Activated CD8-positive, alpha-beta T cell treated with anti-CD3 and anti-CD28 coated beads, Interleukin-2, amount 10 ng/mL, durations not matched to agents 7 days and 5 days (primary cell): ENCODE measurements at regions of chr17 and their contacts with region 1.

Region 1: GRCh38 chr17:7989781-7990655 is 12.4 kb upstream of the GUCY2D start:
- DNase-seq: peak; percentile 93
- ATAC-seq: peak; percentile 91
- H3K4me3 Mint-ChIP-seq: peak overlapping the region; percentile 77
- H3K27ac Mint-ChIP-seq: peak overlapping the region; percentile 88
- H3K4me1 Mint-ChIP-seq: peaks cover 35% of the 10 kb centered on the region
- H3K27me3 Mint-ChIP-seq: peaks cover 16% of the 10 kb centered on the region

Region 2: GRCh38 chr17:7825206-7825990 is 164.6 kb before region 1 on chr17:
- CTCF ChIA-PET with region 1: interaction called, 21 read pairs
- POLR2A ChIA-PET with region 1: no interaction called
- DNase-seq: no peak
- ATAC-seq: no peak
- H3K4me3 Mint-ChIP-seq: no peak overlapping the region
- H3K27ac Mint-ChIP-seq: no peak overlapping the region
- H3K4me1 Mint-ChIP-seq: no peaks in the 10 kb centered on the region
- H3K27me3 Mint-ChIP-seq: peaks cover 18% of the 10 kb centered on the region

Region 3: DNA sequence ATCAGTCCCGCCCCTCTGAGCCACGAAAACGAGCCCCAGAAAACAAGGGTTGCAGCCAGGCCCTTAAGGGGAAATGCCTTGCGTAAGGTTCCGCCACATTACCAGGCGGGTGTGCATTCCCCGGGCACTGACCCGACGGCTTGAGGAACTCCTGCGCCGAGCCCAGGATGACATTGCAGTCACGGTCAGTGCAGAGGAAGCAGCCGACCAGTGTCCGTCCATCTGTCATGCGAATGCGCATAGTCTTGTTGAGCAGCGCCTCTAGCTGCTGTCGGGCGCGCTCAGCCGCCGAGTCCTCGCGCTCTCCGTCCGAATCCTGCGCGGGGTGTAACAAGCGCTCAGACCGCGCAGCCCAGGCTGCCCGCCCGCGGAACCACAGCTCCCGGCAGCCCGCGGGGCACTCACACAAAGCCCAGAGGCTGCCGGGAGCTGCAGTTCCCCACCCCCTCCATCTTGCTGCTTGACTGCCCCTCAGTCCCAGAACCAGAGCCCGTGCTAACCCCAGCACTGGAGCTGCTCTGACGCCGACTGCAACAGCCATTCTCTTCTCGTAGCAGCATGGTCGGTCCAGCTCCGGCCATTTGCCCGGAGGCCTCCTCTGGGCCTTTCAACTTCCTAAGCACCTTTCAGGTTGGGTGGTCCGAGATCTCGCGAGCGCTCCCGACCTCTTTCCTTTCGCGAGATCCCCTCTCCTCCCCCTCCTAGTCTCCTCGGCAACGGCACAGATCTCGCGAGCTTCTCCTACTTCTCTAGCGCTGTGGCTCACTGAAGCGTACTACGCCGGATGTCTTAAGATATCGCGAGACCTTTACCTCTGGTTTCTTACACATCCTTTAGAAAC is 132.9 kb before region 1 on chr17 and contains the start of gene NAA38:
- CTCF ChIA-PET with region 1: interaction called, 201 read pairs
- POLR2A ChIA-PET with region 1: interaction called, 5 read pairs
- DNase-seq: peak; percentile 98
- ATAC-seq: peak; percentile 89
- H3K4me3 Mint-ChIP-seq: no peak within 1 kb of the TSS
- H3K27ac Mint-ChIP-seq: no peak within 1 kb of the TSS
- H3K4me1 Mint-ChIP-seq: peaks cover 3% of the 10 kb centered on the region
- H3K27me3 Mint-ChIP-seq: no peaks in the 10 kb centered on the region
- total RNA-seq, gene NAA38: 92.7 to 93.1 TPM

Region 4: DNA sequence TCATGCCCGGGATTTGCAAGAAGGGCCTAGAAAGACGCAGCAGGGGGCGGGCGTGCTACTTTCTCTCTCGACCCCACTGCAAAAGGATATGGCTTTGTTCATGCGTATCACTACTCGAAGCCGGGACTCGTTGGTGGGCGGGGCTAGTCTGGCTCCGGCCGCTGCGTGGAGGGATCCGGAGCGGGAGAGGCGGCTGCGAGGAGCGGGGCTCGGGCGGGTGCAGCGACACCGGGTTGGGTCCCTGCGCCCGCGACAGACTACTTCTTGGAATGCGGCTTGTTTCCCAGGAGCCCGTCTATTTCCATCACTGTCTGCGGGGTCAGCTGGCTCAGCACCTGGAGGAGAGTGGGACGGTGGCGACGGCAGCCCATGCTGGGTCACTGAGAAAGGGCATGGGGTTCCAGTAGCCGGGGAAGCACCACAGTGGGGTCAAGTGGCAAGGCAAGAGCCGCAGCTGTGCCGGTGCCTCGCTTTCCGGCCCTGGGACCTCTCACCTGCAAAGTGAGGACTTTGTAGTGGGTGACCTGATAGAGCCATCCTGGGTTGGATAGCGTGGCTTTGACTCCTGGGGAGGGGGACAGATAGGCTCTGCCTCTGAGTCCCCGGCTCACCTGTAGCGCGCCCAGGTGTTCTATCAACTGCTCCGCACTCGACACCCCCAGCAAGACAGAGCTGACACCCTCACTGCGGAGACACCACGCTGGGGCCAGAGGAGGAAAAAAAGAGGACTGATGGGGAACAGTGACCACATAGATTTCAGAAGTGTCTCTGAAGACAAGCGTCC is 67.0 kb before region 1 on chr17:
- CTCF ChIA-PET with region 1: interaction called, 237 read pairs
- POLR2A ChIA-PET with region 1: no interaction called
- DNase-seq: peak; percentile 88
- ATAC-seq: peak; percentile 97
- H3K4me3 Mint-ChIP-seq: peak overlapping the region; percentile 54
- H3K27ac Mint-ChIP-seq: peak overlapping the region; percentile 74
- H3K4me1 Mint-ChIP-seq: peaks cover 25% of the 10 kb centered on the region
- H3K27me3 Mint-ChIP-seq: no peaks in the 10 kb centered on the region

Region 5: GRCh38 chr17:7944326-7944725 is 45.7 kb before region 1 on chr17:
- CTCF ChIA-PET with region 1: interaction called, 35 read pairs
- POLR2A ChIA-PET with region 1: interaction called, 3 read pairs
- DNase-seq: no peak
- ATAC-seq: no peak
- H3K4me3 Mint-ChIP-seq: no peak overlapping the region
- H3K27ac Mint-ChIP-seq: peak overlapping the region; percentile 46
- H3K4me1 Mint-ChIP-seq: peaks cover 2% of the 10 kb centered on the region
- H3K27me3 Mint-ChIP-seq: no peaks in the 10 kb centered on the region

Region 6: DNA sequence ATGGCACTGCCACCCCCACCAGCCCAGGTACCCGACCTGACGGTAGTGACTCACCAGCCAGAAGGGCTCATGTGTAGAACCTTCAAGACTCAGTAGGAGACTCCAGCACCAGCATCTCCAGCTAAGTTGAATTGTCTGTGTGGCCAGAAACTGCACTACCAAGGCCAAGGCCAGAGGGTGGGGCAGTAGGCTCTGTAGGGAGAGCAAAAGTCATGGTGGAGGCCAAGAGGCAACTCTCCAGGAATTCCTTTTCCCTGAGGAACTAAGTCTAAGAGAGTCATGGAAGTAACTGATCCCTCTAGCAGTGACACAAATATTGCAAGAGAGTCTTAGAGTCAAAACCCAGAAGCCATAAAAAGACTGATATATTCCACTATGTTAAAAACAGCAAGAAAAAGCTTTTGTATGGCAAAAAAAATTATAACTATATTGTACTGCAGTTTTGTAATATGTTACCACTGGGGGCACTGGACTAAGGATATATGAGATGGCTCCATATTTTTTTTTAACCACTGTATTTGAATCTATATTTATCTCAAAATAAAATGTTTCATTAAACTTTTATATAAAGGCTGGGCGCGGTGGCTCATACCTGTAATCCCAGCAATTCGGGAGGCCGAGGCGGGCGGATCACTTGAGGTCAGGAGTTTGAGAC is 17.8 kb before region 1 on chr17:
- CTCF ChIA-PET with region 1: interaction called, 13 read pairs
- POLR2A ChIA-PET with region 1: no interaction called
- DNase-seq: no peak
- ATAC-seq: no peak
- H3K4me3 Mint-ChIP-seq: no peak overlapping the region
- H3K27ac Mint-ChIP-seq: no peak overlapping the region
- H3K4me1 Mint-ChIP-seq: no peaks in the 10 kb centered on the region
- H3K27me3 Mint-ChIP-seq: peaks cover 17% of the 10 kb centered on the region

Region 7: GRCh38 chr17:8057691-8058114 is 67.7 kb after region 1 on chr17:
- CTCF ChIA-PET with region 1: interaction called, 32 read pairs
- POLR2A ChIA-PET with region 1: no interaction called
- DNase-seq: peak; percentile 59
- ATAC-seq: peak; percentile 72
- H3K4me3 Mint-ChIP-seq: no peak overlapping the region
- H3K27ac Mint-ChIP-seq: no peak overlapping the region
- H3K4me1 Mint-ChIP-seq: peaks cover 32% of the 10 kb centered on the region
- H3K27me3 Mint-ChIP-seq: peaks cover 44% of the 10 kb centered on the region